CD4-positive, alpha-beta memory T cell (primary cell): ENCODE measurements at regions of chr15 and their contacts with region 1.

Region 1: DNA sequence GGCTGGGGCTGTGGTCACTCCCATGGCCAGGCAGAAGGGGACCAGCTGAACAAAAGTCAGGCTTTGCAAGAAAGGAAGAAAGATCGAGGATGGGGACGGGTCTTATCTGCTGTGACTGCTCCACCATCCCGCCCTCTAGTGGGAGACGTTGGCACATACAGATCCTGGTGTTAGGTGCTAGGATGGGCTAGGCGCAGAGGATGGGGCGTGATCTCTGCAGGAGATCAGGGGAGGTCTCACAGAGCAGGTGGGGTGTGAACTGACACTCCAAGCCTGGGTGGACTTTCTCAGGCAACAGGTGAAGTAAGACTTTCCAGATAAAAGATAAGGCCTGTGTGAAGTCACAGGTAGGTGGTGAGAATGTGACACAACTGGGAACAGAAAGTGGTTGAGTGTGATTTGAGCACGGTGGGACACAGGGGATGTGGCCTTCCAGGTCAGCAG is 141.9 kb upstream of the SMAD3 start:
- DNase-seq: peak in 3 of 5 donors; percentile 15 to 23 (median 23)
- H3K4me3 ChIP-seq: no peak overlapping the region
- H3K4me3 Mint-ChIP-seq: no peak overlapping the region
- H3K27ac ChIP-seq: no peak overlapping the region
- H3K27ac Mint-ChIP-seq: no peak overlapping the region
- H3K4me1 ChIP-seq: no peaks in the 10 kb centered on the region
- H3K4me1 Mint-ChIP-seq: peaks cover 4 to 9% (median 7%) of the 10 kb centered on the region in 4 donors
- H3K27me3 ChIP-seq: no peaks in the 10 kb centered on the region
- H3K27me3 Mint-ChIP-seq: peaks cover 15 to 32% of the 10 kb centered on the region in 2 donors

Region 2: GRCh38 chr15:66907826-66908743 is 15.4 kb before region 1 on chr15:
- CTCF ChIA-PET with region 1: interaction called, 85 read pairs
- POLR2A ChIA-PET with region 1: interaction called, 6 read pairs
- intact Hi-C with region 1: loop called (anchors 1 kb)
- DNase-seq: no peak
- H3K4me3 ChIP-seq: no peak overlapping the region
- H3K4me3 Mint-ChIP-seq: no peak overlapping the region
- H3K27ac ChIP-seq: no peak overlapping the region
- H3K27ac Mint-ChIP-seq: no peak overlapping the region
- H3K4me1 ChIP-seq: peaks cover 19% of the 10 kb centered on the region
- H3K4me1 Mint-ChIP-seq: peaks cover 11 to 29% (median 17%) of the 10 kb centered on the region in 4 donors
- H3K27me3 ChIP-seq: no peaks in the 10 kb centered on the region
- H3K27me3 Mint-ChIP-seq: peaks cover 3 to 6% of the 10 kb centered on the region in 2 donors